Esophagus muscularis mucosa (tissue), 4 donors: ENCODE measurements at regions of chr3 and their contacts with region 1.

Region 1: GRCh38 chr3:113745273-113746068 is 578 bp downstream of the NAA50 start:
- DNase-seq: no peak
- H3K4me3 ChIP-seq: peak overlapping the region; percentile 67 to 96 (median 88)
- H3K27ac ChIP-seq: peak overlapping the region; percentile 93 to 97 (median 96)
- H3K4me1 ChIP-seq: peaks cover 32 to 71% (median 64%) of the 10 kb centered on the region in 4 donors
- H3K27me3 ChIP-seq: no peaks in the 10 kb centered on the region
- CTCF ChIP-seq: peak; percentile 54 to 74 (median 58)
- EP300 ChIP-seq: no peak
- POLR2A ChIP-seq: no peak

Region 2: DNA sequence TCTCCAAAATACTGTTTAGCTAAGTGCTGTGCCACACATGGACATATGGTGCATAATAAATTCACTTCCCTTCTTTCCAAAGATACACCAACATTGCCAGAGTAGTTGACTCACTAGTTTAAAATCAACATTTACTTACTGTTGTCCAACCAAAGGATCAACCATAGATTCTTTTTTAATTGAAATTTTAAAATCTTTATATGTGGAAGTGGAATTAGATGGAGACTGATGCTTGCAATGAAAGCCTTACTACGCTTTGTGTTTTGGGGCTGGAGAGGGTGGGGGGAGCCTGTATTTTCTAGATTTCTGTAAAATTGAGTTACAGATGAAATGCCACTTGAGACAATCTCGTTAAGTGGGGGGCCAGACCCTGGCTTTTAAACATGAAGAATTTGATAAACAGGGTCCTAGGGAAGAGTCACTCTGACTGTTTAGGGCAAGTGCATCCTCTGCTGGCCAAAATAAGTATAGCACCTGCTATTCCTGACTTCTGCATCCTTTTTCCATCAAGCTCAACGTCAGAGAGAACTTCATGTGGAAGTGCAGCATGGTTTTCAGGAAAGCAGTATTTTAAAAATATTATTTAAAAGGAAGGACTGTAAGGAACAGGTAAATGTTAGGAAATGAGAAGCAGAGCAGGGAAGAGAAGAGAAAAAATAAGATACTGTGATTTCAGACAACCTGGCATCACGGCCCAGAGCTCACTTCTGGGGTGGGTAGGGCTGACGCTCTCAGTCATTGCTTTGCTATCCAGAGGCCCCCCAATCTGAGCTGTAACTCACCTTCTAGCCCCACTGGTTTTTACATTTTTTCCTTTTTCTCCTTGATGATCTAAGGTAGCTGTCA is 457.4 kb before region 1 on chr3:
- intact Hi-C with region 1: no loop called
- DNase-seq: no peak
- H3K4me3 ChIP-seq: no peak overlapping the region
- H3K27ac ChIP-seq: peak overlapping the region; percentile 65 to 79 (median 70)
- H3K4me1 ChIP-seq: peaks cover 3 to 52% (median 44%) of the 10 kb centered on the region in 4 donors
- H3K27me3 ChIP-seq: no peaks in the 10 kb centered on the region
- CTCF ChIP-seq: peak; percentile 99 to 100 (median 100)
- EP300 ChIP-seq: no peak
- POLR2A ChIP-seq: no peak

Region 3: DNA sequence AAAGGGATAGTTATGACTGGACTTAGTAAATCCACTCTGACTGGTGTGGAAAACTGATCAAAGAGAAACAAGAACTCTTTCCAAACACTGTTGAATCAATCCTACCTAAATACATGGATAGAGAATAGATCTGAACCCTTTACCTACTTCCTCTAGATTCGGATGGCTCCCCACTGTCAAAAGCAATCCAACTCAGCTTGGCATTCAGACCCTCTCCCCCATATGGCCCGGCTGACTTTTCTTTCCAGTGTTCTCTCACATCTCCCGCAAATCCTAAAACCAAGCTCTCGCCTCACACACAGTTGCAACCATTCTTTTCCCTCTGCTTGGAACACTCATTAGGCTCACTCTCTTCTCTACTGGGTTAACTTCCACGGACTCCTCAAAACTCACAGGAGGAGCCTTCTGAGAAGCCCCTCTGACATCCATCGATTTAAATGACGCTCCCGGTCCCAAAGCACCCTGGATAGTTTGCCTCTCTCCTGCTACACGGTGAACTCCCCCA is 231.2 kb before region 1 on chr3:
- intact Hi-C with region 1: loop called (anchors 5 kb)
- DNase-seq: no peak
- H3K4me3 ChIP-seq: peak overlapping the region; percentile 77 to 91 (median 84)
- H3K27ac ChIP-seq: peak overlapping the region; percentile 85 to 94 (median 90)
- H3K4me1 ChIP-seq: peaks cover 5 to 25% (median 22%) of the 10 kb centered on the region in 4 donors
- H3K27me3 ChIP-seq: peaks cover 0 to 11% (median 0%) of the 10 kb centered on the region in 4 donors
- CTCF ChIP-seq: no peak
- EP300 ChIP-seq: no peak
- POLR2A ChIP-seq: no peak

Region 4: GRCh38 chr3:113696658-113697499 is 48.6 kb before region 1 on chr3:
- intact Hi-C with region 1: loop called (anchors 2 kb)
- DNase-seq: peak; percentile 100
- H3K4me3 ChIP-seq: peak overlapping the region; percentile 90 to 98 (median 96)
- H3K27ac ChIP-seq: peak overlapping the region; percentile 99 to 100 (median 99)
- H3K4me1 ChIP-seq: peaks cover 40 to 54% (median 47%) of the 10 kb centered on the region in 4 donors
- H3K27me3 ChIP-seq: no peaks in the 10 kb centered on the region
- CTCF ChIP-seq: peak in 2 of 3 experiments; percentile 34 to 37
- EP300 ChIP-seq: no peak
- POLR2A ChIP-seq: no peak

Region 5: GRCh38 chr3:114005481-114005880 is 260.0 kb after region 1 on chr3:
- intact Hi-C with region 1: no loop called
- DNase-seq: no peak
- H3K4me3 ChIP-seq: no peak overlapping the region
- H3K27ac ChIP-seq: no peak overlapping the region
- H3K4me1 ChIP-seq: no peaks in the 10 kb centered on the region
- H3K27me3 ChIP-seq: no peaks in the 10 kb centered on the region
- CTCF ChIP-seq: no peak
- EP300 ChIP-seq: no peak
- POLR2A ChIP-seq: no peak